ENCODE measurements at regions of chr12 and their contacts with region 1.

Region 1: GRCh38 chr12:123905319-123905925 is 67.2 kb downstream of the CCDC92 start:
- DNase-seq: peak in 2 of 5 donors; percentile 28 to 30
- ATAC-seq: peak in 1 of 4 donors; percentile 44
- H3K4me3 ChIP-seq: no peak overlapping the region
- H3K27ac ChIP-seq: no peak overlapping the region
- H3K4me1 ChIP-seq: peaks cover 0 to 8% (median 0%) of the 10 kb centered on the region in 12 donors
- H3K27me3 ChIP-seq: peaks cover 0 to 6% (median 0%) of the 10 kb centered on the region in 9 donors
- CTCF ChIP-seq: peak; percentile 63 to 83 (median 78)
- POLR2A ChIP-seq: no peak

Region 2: GRCh38 chr12:123822804-123823203 is 82.6 kb before region 1 on chr12:
- intact Hi-C with region 1: no loop called
- DNase-seq: no peak
- ATAC-seq: no peak
- H3K4me3 ChIP-seq: no peak overlapping the region
- H3K27ac ChIP-seq: no peak overlapping the region
- H3K4me1 ChIP-seq: no peaks in the 10 kb centered on the region
- H3K27me3 ChIP-seq: peaks cover 0 to 5% (median 0%) of the 10 kb centered on the region in 9 donors
- CTCF ChIP-seq: no peak
- POLR2A ChIP-seq: no peak

Region 3: DNA sequence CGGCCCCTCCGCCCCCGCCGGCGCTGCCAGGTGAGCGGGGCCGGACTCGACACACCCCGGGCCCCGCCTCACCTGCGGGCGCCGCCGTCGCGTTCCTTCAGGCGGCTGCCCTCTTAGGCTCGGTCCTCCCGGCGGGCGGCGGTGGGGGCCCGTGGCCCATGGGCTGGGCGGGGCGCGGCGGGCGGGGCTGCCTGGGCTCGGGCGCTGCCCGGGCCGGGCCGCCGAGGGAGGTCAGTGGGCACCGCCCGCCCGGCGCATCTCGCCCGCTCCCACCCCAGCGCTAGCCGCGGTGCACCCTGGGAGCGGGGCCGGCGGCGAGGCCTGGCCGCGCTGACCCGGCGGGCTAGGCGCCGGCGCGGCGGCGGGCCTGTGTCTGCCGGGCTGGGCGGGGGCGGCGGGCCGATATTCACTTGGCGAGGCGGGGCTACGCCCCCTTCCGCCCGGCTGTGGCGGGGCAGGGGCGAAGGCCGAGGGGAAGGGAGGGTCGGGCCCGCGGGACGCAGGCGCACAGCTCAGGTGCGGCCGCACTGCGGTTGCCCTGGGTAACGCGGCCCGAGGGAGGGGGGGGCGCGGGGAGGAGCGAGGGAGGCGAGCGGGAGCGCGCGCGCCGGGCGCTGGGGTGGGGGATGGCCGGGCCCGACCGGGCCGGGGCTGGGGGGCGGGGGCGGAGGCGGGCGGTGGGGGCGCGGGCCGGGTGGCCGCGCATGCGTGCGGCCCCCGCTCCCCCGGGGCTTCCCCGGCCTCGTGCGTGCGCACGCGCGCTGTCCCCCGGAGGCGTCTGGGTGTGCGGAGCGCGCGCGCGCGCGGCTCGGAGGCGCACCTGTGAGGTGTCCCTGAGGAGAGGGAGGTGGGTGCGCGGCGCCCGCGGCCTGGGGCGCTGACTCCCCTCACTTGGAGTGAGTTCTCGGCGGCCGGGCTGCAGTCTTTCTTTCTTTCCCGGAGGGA is 67.3 kb after region 1 on chr12 and contains the starts of genes CCDC92 and ZNF664:
- intact Hi-C with region 1: loop called in 1 of 10 experiments (anchors 2 kb)
- DNase-seq: peak; percentile 94 to 96 (median 95)
- ATAC-seq: peak; percentile 92 to 96 (median 94)
- H3K4me3 ChIP-seq: peak within 1 kb of the TSS; percentile 71 to 98 (median 92)
- H3K27ac ChIP-seq: peak within 1 kb of the TSS; percentile 87 to 99 (median 94)
- H3K4me1 ChIP-seq: peaks cover 0 to 47% (median 22%) of the 10 kb centered on the region in 12 donors
- H3K27me3 ChIP-seq: no peaks in the 10 kb centered on the region
- CTCF ChIP-seq: peak in 5 of 12 donors; percentile 15 to 38 (median 32)
- POLR2A ChIP-seq: peak; percentile 23 to 24
- total RNA-seq, gene CCDC92: 37.8 to 77.6 (median 57.3) TPM
- total RNA-seq, gene ZNF664: 59.8 to 104 (median 78.0) TPM

Region 4: DNA sequence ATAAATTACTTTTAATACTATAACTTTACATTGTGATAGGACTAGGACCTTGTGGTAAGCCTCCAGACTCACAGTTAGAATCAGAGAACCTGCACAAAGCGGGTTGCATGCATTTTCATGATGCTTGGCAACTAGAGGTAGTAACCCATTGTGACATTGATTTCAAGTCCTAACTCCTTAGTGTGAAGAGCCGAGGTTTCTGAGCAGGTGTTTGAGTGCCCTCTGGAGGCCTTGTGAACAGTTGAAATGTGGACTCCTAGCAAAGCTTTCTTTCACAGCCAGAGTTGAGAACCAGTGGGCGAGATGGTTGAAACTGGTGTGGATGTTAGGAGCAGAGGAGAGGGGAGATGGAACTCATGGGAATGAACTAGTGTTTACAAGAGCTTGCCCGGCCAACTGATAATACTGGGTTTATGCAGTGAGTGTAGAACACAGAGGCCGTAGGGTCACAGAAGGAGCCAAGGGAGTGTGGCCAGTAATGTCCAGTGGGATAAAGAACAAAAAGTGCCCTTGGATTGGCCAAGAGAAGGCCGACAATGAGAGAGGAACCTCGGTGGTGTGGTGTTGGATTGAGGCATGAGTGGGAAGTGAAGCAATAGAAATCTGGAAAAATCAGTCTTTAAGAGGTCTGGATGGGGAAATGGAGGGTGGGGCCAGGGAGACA is 78.5 kb after region 1 on chr12:
- intact Hi-C with region 1: loop called (anchors 2 to 5 kb)
- DNase-seq: peak in 2 of 5 donors; percentile 38 to 62
- ATAC-seq: peak; percentile 64 to 84 (median 80)
- H3K4me3 ChIP-seq: no peak overlapping the region
- H3K27ac ChIP-seq: peak overlapping the region in 2 of 12 donors; percentile 12 to 23
- H3K4me1 ChIP-seq: peaks cover 3 to 56% (median 30%) of the 10 kb centered on the region in 12 donors
- H3K27me3 ChIP-seq: no peaks in the 10 kb centered on the region
- CTCF ChIP-seq: peak; percentile 41 to 78 (median 60)
- POLR2A ChIP-seq: no peak

Region 5: GRCh38 chr12:124026755-124027745 is 121.6 kb after region 1 on chr12:
- intact Hi-C with region 1: loop called in 8 of 10 experiments (anchors 5 to 10 kb)
- DNase-seq: peak in 2 of 5 donors; percentile 40 to 54
- ATAC-seq: peak; percentile 59 to 88 (median 78)
- H3K4me3 ChIP-seq: no peak overlapping the region
- H3K27ac ChIP-seq: peak overlapping the region in 10 of 12 donors; percentile 15 to 79 (median 54)
- H3K4me1 ChIP-seq: peaks cover 0 to 44% (median 24%) of the 10 kb centered on the region in 12 donors
- H3K27me3 ChIP-seq: no peaks in the 10 kb centered on the region
- CTCF ChIP-seq: no peak
- POLR2A ChIP-seq: no peak

Region 6: GRCh38 chr12:124036674-124037109 is 131.3 kb after region 1 on chr12:
- intact Hi-C with region 1: loop called in 7 of 10 experiments (anchors 5 kb)
- DNase-seq: peak in 1 of 5 donors; percentile 49
- ATAC-seq: peak in 3 of 4 donors; percentile 35 to 55 (median 51)
- H3K4me3 ChIP-seq: no peak overlapping the region
- H3K27ac ChIP-seq: no peak overlapping the region
- H3K4me1 ChIP-seq: peaks cover 0 to 9% (median 0%) of the 10 kb centered on the region in 12 donors
- H3K27me3 ChIP-seq: no peaks in the 10 kb centered on the region
- CTCF ChIP-seq: peak; percentile 84 to 99 (median 94)
- POLR2A ChIP-seq: no peak

Measured in heart left ventricle (tissue), 16 donors.